ENCODE measurements at regions of chr4 and their contacts with region 1.

Region 1: GRCh38 chr4:140851032-140851636 is 94.9 kb upstream of the TBC1D9 start:
- DNase-seq: no peak
- ATAC-seq: peak in 1 of 2 donors; percentile 41
- H3K4me3 ChIP-seq: no peak overlapping the region
- H3K27ac ChIP-seq: no peak overlapping the region
- H3K4me1 ChIP-seq: peaks cover 0 to 1% of the 10 kb centered on the region in 2 donors
- H3K27me3 ChIP-seq: no peaks in the 10 kb centered on the region
- CTCF ChIP-seq: peak; percentile 44 to 69 (median 64)
- POLR2A ChIP-seq: no peak

Region 2: DNA sequence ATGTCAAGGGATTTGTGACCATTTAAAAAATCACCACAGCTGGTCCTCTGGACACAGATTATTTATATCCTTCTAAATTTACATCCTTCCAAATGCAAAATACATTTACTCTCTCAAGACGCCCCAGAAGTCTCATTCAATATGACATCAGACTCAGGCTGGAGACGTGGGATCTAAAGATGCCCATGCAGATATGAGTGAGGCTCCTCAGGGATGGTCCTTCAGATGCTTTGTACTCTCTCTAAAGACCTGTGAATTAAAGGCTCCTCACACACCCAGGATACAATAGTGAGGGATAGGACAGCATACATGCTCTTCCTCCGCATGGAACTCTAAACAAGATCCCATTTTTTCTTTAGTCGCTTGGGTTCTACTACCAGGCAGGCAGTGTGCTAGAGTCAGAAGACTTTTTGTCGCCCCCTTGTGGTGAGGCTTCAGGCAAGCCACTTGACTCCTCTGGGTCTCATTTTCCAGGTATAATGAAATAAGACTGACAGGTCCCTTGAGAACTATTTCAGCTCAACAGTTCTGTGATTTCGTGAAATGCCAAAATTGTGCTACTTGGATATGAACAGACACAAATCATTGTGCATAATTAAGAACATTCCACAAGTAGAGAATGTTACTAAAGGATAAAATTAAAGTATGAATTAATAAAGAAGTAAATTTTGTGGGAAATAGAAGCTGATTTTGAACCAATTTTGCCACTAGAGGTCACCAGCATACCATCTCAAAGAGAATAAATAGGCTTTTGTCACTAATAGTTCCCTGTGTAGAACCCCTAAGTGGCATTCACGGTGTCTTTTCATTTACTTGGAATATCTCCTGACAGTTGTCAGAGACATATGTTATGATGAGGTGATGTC is 491.3 kb before region 1 on chr4:
- in situ Hi-C with region 1: loop called in 2 of 4 experiments (anchors 10 to 25 kb)
- intact Hi-C with region 1: loop called (anchors 2 kb)
- DNase-seq: peak; percentile 36 to 48
- ATAC-seq: peak; percentile 62 to 87
- H3K4me3 ChIP-seq: no peak overlapping the region
- H3K27ac ChIP-seq: no peak overlapping the region
- H3K4me1 ChIP-seq: no peaks in the 10 kb centered on the region
- H3K27me3 ChIP-seq: no peaks in the 10 kb centered on the region
- CTCF ChIP-seq: peak; percentile 48 to 86 (median 61)
- POLR2A ChIP-seq: no peak

Region 3: GRCh38 chr4:140523857-140524742 is 327.0 kb before region 1 on chr4 and contains the start of gene ELMOD2:
- in situ Hi-C with region 1: no loop called
- intact Hi-C with region 1: loop called (anchors 2 kb)
- DNase-seq: peak; percentile 97 to 98
- ATAC-seq: peak; percentile 99
- H3K4me3 ChIP-seq: peak within 1 kb of the TSS; percentile 67 to 87 (median 86)
- H3K27ac ChIP-seq: peak within 1 kb of the TSS; percentile 76 to 90 (median 81)
- H3K4me1 ChIP-seq: peaks cover 2 to 18% of the 10 kb centered on the region in 2 donors
- H3K27me3 ChIP-seq: no peaks in the 10 kb centered on the region
- CTCF ChIP-seq: peak; percentile 71 to 94 (median 81)
- POLR2A ChIP-seq: peak in 1 of 2 donors; percentile 34
- total RNA-seq, gene ELMOD2: 3.2 to 13.7 (median 10.9) TPM

Region 4: GRCh38 chr4:140982613-140983340 is 131.6 kb after region 1 on chr4:
- in situ Hi-C with region 1: no loop called
- intact Hi-C with region 1: no loop called
- DNase-seq: no peak
- ATAC-seq: no peak
- H3K4me3 ChIP-seq: no peak overlapping the region
- H3K27ac ChIP-seq: no peak overlapping the region
- H3K4me1 ChIP-seq: peaks cover 16 to 19% of the 10 kb centered on the region in 2 donors
- H3K27me3 ChIP-seq: no peaks in the 10 kb centered on the region
- CTCF ChIP-seq: no peak
- POLR2A ChIP-seq: no peak